Sigmoid colon (tissue), 7 donors: ENCODE measurements at regions of chr19 and their contacts with region 1.

Region 1: GRCh38 chr19:18281082-18282020 is at the start of gene JUND:
- DNase-seq: peak; percentile 99
- H3K4me3 ChIP-seq: peak within 1 kb of the TSS; percentile 77 to 98 (median 97)
- H3K27ac ChIP-seq: peak within 1 kb of the TSS; percentile 99 to 100 (median 100)
- H3K4me1 ChIP-seq: peaks cover 0 to 46% (median 41%) of the 10 kb centered on the region in 4 donors
- H3K27me3 ChIP-seq: no peaks in the 10 kb centered on the region
- CTCF ChIP-seq: no peak
- EP300 ChIP-seq: peak in 3 of 4 donors; percentile 42 to 85 (median 83)
- POLR2A ChIP-seq: peak; percentile 7 to 34
- total RNA-seq, gene JUND: 163 to 369 (median 230) TPM

Region 2: GRCh38 chr19:18291590-18292461 is 10.5 kb after region 1 on chr19:
- intact Hi-C with region 1: loop called (anchors 1 kb)
- DNase-seq: peak; percentile 96
- H3K4me3 ChIP-seq: peak overlapping the region; percentile 62 to 94 (median 74)
- H3K27ac ChIP-seq: peak overlapping the region; percentile 96 to 100 (median 98)
- H3K4me1 ChIP-seq: peaks cover 0 to 38% (median 34%) of the 10 kb centered on the region in 4 donors
- H3K27me3 ChIP-seq: no peaks in the 10 kb centered on the region
- CTCF ChIP-seq: no peak
- EP300 ChIP-seq: peak in 3 of 4 donors; percentile 8 to 65 (median 55)
- POLR2A ChIP-seq: peak; percentile 86 to 88

Region 3: GRCh38 chr19:18304458-18305310 is 23.3 kb after region 1 on chr19:
- intact Hi-C with region 1: loop called (anchors 1 kb)
- DNase-seq: peak; percentile 94
- H3K4me3 ChIP-seq: peak overlapping the region; percentile 20 to 42 (median 37)
- H3K27ac ChIP-seq: peak overlapping the region; percentile 93 to 97 (median 96)
- H3K4me1 ChIP-seq: peaks cover 0 to 75% (median 62%) of the 10 kb centered on the region in 4 donors
- H3K27me3 ChIP-seq: no peaks in the 10 kb centered on the region
- CTCF ChIP-seq: no peak
- EP300 ChIP-seq: no peak
- POLR2A ChIP-seq: peak; percentile 63 to 67

Region 4: DNA sequence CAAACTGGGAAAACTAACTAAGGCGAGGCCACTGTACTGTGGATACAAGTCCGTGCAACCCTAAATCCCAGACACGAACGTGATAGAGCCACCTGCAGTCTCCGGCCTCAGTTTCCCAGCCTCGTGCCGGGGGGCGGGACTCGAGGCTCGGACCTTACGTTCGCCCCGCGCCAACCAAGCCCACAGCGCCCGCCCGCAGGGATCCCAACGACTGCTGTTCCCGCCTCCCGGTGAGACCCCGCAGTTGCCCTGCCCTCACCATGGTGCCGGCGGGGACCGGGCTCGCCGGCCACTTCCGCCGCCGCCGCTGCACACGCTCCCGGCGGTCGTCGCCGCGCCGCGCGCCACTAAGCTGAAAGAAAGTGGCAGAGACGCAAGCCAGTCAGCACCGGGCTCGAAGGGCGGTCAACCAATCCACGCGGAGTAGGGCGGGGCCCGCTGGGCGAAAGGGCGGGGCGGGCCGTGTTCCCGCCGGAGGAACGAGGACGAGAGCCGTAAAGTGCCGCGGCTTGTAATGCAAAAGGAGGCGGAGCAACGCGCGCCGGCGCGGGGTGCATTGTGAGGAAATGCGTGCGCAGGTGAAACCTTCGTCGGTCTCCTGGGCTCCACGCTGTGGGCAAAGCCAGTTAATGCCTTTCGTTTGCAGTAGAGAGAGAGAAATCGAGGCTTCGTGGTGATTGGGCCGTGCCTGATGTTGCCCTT is 41.6 kb after region 1 on chr19 and contains the start of gene LSM4:
- intact Hi-C with region 1: loop called (anchors 1 kb)
- DNase-seq: peak; percentile 99
- H3K4me3 ChIP-seq: peak within 1 kb of the TSS; percentile 61 to 91 (median 84)
- H3K27ac ChIP-seq: peak within 1 kb of the TSS; percentile 90 to 93 (median 92)
- H3K4me1 ChIP-seq: peaks cover 0 to 45% (median 37%) of the 10 kb centered on the region in 4 donors
- H3K27me3 ChIP-seq: no peaks in the 10 kb centered on the region
- CTCF ChIP-seq: no peak
- EP300 ChIP-seq: no peak
- POLR2A ChIP-seq: peak; percentile 53 to 75
- total RNA-seq, gene LSM4: 89.1 to 144 (median 119) TPM

Region 5: DNA sequence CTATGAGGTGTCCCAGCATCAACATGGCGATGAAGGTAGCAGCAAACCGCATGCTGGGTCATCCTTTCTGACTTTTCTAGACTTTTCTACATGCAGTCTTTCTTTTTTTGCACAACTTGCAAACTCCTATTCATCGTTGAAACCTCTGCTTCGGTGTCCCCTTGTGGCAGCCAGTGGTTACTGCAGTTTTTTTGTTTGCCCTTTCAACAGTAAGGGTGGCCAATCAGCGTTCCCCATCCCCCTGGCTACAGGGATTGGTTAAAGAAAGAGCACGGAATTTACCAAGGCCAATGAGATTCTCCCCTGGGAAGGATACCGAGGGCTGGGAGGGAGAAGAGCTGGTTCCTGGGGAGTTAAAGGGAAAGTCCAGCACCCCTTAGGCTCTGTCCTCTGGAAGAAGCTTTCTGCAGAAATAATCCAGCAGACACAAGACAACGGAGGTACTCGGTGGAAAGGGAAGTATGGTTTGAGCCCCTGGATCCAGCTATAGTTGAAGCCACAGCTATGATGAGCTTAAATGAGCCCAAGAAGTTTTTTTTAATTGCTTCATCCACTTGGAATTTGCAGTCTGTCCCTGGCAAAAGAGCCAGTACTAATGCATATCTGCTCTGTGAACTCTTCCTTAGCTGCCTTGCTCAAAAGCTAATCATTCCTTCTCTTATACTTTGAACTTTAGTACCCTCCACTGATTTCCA is 47.1 kb after region 1 on chr19:
- intact Hi-C with region 1: loop called (anchors 1 kb)
- DNase-seq: peak; percentile 98
- H3K4me3 ChIP-seq: peak overlapping the region in 3 of 4 donors; percentile 22 to 31 (median 23)
- H3K27ac ChIP-seq: peak overlapping the region; percentile 64 to 82 (median 80)
- H3K4me1 ChIP-seq: peaks cover 0 to 22% (median 19%) of the 10 kb centered on the region in 4 donors
- H3K27me3 ChIP-seq: no peaks in the 10 kb centered on the region
- CTCF ChIP-seq: peak; percentile 83 to 100 (median 92)
- EP300 ChIP-seq: no peak
- POLR2A ChIP-seq: peak in 1 of 2 donors; percentile 48

Region 6: GRCh38 chr19:18340190-18340989 is 59.0 kb after region 1 on chr19 and contains the start of gene PGPEP1:
- intact Hi-C with region 1: loop called (anchors 5 kb)
- DNase-seq: peak; percentile 80
- H3K4me3 ChIP-seq: peak within 1 kb of the TSS; percentile 75 to 86 (median 82)
- H3K27ac ChIP-seq: peak within 1 kb of the TSS; percentile 78 to 89 (median 80)
- H3K4me1 ChIP-seq: peaks cover 0 to 22% (median 12%) of the 10 kb centered on the region in 4 donors
- H3K27me3 ChIP-seq: no peaks in the 10 kb centered on the region
- CTCF ChIP-seq: no peak
- EP300 ChIP-seq: no peak
- POLR2A ChIP-seq: peak; percentile 27 to 49
- total RNA-seq, gene PGPEP1: 15.0 to 26.0 (median 16.6) TPM

Region 7: DNA sequence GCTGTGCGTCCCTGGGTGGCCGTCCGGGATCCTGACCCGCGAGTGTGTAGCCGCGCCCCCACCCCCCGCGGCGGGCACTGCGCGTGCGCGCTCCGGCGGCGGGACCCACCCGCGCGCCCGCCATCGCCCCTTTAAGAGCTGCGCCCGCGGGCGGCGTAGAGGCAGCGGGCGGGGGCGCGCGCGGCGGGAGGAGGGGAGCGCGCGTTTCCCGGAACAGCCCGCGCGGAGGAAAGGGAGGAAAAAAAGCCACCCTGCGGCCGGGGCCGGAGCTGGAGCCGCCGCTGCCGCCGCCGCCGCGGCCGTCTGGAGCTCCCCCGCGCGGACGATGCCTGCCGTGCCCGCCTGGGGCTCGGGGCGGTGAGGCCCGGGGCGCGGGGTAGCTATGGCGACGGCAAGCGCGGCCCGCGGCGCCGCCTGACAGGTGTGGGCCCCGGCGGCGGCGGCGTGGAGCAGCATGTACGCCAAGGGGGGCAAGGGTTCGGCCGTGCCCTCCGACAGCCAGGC is 137.9 kb after region 1 on chr19 and contains the start of gene SSBP4:
- intact Hi-C with region 1: loop called (anchors 5 kb)
- DNase-seq: no peak
- H3K4me3 ChIP-seq: peak within 1 kb of the TSS; percentile 41 to 74 (median 64)
- H3K27ac ChIP-seq: peak within 1 kb of the TSS; percentile 82 to 88 (median 86)
- H3K4me1 ChIP-seq: peaks cover 0 to 79% (median 69%) of the 10 kb centered on the region in 4 donors
- H3K27me3 ChIP-seq: peaks cover 0 to 29% (median 3%) of the 10 kb centered on the region in 3 donors
- CTCF ChIP-seq: peak in 1 of 4 experiments; percentile 14
- EP300 ChIP-seq: no peak
- POLR2A ChIP-seq: no peak
- total RNA-seq, gene SSBP4: 52.4 to 71.4 (median 58.0) TPM